HepG2 (cell line): ENCODE measurements at regions of chr15 and their contacts with region 1.

Region 1: GRCh38 chr15:96818861-96819260 is 488.4 kb downstream of the NR2F2 start:
- DNase-seq: no peak
- ATAC-seq: no peak
- H3K4me3 ChIP-seq: no peak overlapping the region
- H3K27ac ChIP-seq: no peak overlapping the region
- H3K4me1 ChIP-seq: no peaks in the 10 kb centered on the region
- H3K27me3 ChIP-seq: no peaks in the 10 kb centered on the region; a peak in 1 of 5 replicates
- CTCF ChIP-seq: no peak
- EP300 ChIP-seq: no peak
- POLR2A ChIP-seq: no peak
- RAD21 ChIP-seq: no peak

Region 2: GRCh38 chr15:95875121-95875688 is 943.7 kb before region 1 on chr15:
- CTCF ChIA-PET with region 1: no interaction called
- POLR2A ChIA-PET with region 1: no interaction called
- in situ Hi-C with region 1: no loop called
- intact Hi-C with region 1: no loop called
- DNase-seq: peak; percentile 3
- ATAC-seq: no peak
- H3K4me3 ChIP-seq: no peak overlapping the region
- H3K27ac ChIP-seq: no peak overlapping the region
- H3K4me1 ChIP-seq: no peaks in the 10 kb centered on the region
- H3K27me3 ChIP-seq: no peaks in the 10 kb centered on the region
- CTCF ChIP-seq: no peak
- EP300 ChIP-seq: no peak
- POLR2A ChIP-seq: no peak
- RAD21 ChIP-seq: no peak

Region 3: GRCh38 chr15:97383516-97383915 is 564.7 kb after region 1 on chr15:
- CTCF ChIA-PET with region 1: no interaction called
- POLR2A ChIA-PET with region 1: no interaction called
- in situ Hi-C with region 1: no loop called
- intact Hi-C with region 1: loop called (anchors 5 kb)
- DNase-seq: no peak
- ATAC-seq: no peak
- H3K4me3 ChIP-seq: no peak overlapping the region
- H3K27ac ChIP-seq: no peak overlapping the region
- H3K4me1 ChIP-seq: no peaks in the 10 kb centered on the region
- H3K27me3 ChIP-seq: no peaks in the 10 kb centered on the region; a peak in 1 of 5 replicates
- CTCF ChIP-seq: no peak
- EP300 ChIP-seq: no peak
- POLR2A ChIP-seq: no peak
- RAD21 ChIP-seq: no peak